ENCODE measurements at regions of chr3 and their contacts with region 1.

Region 1: GRCh38 chr3:16550676-16551341 is 37.3 kb upstream of the RFTN1 start:
- DNase-seq: no peak
- ATAC-seq: peak; percentile 87

Region 2: DNA sequence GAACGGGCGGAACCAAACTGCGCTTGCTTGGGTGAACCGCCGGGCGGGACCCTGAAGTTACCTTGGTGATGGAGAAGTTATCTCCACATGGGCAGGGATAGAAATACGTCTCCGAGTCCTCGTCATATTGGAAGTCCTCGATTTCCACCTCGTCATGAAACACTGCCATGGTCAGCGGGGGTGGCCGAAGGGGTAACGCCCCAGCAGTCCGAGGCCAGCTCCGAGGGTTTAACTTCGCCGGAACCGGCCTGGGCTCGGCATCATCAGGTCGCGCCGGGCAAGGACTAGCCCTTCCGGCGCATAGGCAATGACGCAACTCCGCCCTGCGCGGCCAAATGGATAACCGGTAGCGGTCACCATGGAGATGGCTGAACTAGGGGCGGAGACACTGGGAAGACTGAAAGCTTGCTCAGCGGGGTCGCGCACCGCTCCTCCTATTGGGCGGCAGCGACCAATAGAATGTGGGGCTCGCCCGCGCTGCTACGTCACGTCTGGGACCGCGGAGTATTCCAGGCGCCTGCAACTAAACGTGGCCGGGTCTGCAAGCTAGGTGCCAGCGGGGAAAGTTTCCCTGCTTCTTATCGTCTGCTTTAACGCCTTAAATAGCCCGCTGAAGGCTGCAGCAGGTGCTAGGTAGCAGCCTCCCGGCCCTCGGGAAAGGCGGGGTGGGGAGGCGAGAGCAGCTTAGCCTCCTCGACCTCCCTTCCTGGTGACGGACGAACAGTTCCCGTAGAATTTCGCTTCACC is 285.9 kb before region 1 on chr3 and contains the starts of genes DPH3 and OXNAD1:
- intact Hi-C with region 1: loop called (anchors 5 kb)
- DNase-seq: peak; percentile 100
- ATAC-seq: peak; percentile 99
- total RNA-seq, gene DPH3: 18.1 TPM
- total RNA-seq, gene OXNAD1: 14.6 TPM

Region 3: GRCh38 chr3:16583551-16583950 is 32.7 kb after region 1 on chr3:
- intact Hi-C with region 1: no loop called
- DNase-seq: no peak
- ATAC-seq: no peak